Colonic mucosa (tissue), 4 donors: ENCODE measurements at regions of chrX and their contacts with region 1.

Region 1: DNA sequence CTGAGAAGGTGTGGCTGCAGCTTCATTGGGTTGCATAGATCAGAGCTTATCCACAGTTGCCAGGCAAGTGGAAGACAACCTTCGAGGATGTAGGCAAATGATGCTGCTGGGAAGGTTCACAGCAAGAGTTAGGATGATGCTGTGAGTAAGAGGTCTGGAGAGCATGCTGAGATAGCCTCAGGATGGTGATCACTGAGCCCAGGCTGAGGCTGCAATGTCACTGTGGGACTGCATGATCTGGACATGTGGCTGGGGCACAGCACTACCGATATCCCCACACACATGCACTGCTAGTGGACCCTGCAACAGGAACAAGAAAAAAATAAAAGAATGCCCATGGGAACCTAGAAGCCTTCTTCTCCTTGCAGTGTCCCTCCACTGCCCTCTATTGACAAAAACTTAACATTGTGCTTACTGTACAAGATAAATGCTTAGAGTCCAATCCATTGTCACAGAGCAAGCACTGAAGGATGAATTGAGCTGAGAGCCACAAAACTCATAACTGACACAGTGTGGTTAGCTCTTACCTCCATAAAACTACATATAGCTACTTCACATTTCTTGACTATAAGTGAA is 105.6 kb downstream of the CNKSR2 start:
- DNase-seq: no peak
- H3K4me3 ChIP-seq: no peak overlapping the region
- H3K27ac ChIP-seq: no peak overlapping the region
- H3K4me1 ChIP-seq: no peaks in the 10 kb centered on the region
- H3K27me3 ChIP-seq: no peaks in the 10 kb centered on the region
- CTCF ChIP-seq: peak; percentile 38

Region 2: DNA sequence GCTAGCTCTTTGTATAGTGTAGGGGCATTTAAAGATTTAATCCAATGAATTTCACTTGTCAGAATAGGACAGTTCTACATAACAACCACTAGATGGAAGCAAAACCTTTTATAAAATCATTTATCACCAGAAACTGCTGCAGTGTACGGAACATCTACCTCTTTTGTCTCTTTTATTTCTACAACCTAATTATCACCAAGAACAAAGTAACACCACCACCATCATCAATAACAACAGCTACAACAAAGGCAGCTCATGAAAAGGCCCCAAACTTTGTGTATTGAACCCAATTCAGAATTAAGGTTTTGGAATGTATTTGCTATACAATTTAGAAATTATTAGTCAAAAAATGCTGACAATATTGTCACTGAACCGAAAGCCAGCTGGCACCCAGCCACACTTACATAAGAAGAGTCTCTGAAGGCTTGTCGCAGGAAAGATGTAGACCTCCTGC is 952.2 kb before region 1 on chrX:
- intact Hi-C with region 1: loop called (anchors 5 kb)
- DNase-seq: no peak
- H3K4me3 ChIP-seq: no peak overlapping the region
- H3K27ac ChIP-seq: no peak overlapping the region
- H3K4me1 ChIP-seq: no peaks in the 10 kb centered on the region
- H3K27me3 ChIP-seq: peaks cover 5% of the 10 kb centered on the region
- CTCF ChIP-seq: peak; percentile 53